CD8-positive, alpha-beta T cell (primary cell): ENCODE measurements at regions of chr11 and their contacts with region 1.

Region 1: GRCh38 chr11:47854667-47855066 is 6.5 kb upstream of the NUP160 start:
- DNase-seq: no peak
- ATAC-seq: no peak
- H3K4me3 ChIP-seq: no peak overlapping the region
- H3K4me3 Mint-ChIP-seq: no peak overlapping the region
- H3K27ac ChIP-seq: no peak overlapping the region
- H3K27ac Mint-ChIP-seq: no peak overlapping the region
- H3K4me1 ChIP-seq: peaks cover 16% of the 10 kb centered on the region
- H3K4me1 Mint-ChIP-seq: peaks cover 24% of the 10 kb centered on the region
- H3K27me3 ChIP-seq: no peaks in the 10 kb centered on the region
- H3K27me3 Mint-ChIP-seq: no peaks in the 10 kb centered on the region
- CTCF ChIP-seq: no peak

Region 2: GRCh38 chr11:47248664-47249377 is 605.8 kb before region 1 on chr11 and contains the start of gene ACP2:
- CTCF ChIA-PET with region 1: no interaction called
- POLR2A ChIA-PET with region 1: no interaction called
- intact Hi-C with region 1: no loop called
- DNase-seq: peak; percentile 70 to 93 (median 85)
- ATAC-seq: peak; percentile 97
- H3K4me3 ChIP-seq: peak within 1 kb of the TSS; percentile 81 to 90
- H3K4me3 Mint-ChIP-seq: peak within 1 kb of the TSS; percentile 100
- H3K27ac ChIP-seq: peak within 1 kb of the TSS; percentile 63 to 83
- H3K27ac Mint-ChIP-seq: peak within 1 kb of the TSS; percentile 100
- H3K4me1 ChIP-seq: peaks cover 17% of the 10 kb centered on the region
- H3K4me1 Mint-ChIP-seq: peaks cover 32% of the 10 kb centered on the region
- H3K27me3 ChIP-seq: no peaks in the 10 kb centered on the region
- H3K27me3 Mint-ChIP-seq: no peaks in the 10 kb centered on the region
- CTCF ChIP-seq: no peak
- total RNA-seq, gene ACP2: 18.3 to 22.6 TPM

Region 3: GRCh38 chr11:47869546-47870393 is 15.1 kb after region 1 on chr11:
- CTCF ChIA-PET with region 1: interaction called, 14 read pairs
- POLR2A ChIA-PET with region 1: no interaction called
- intact Hi-C with region 1: no loop called
- DNase-seq: no peak
- ATAC-seq: no peak
- H3K4me3 ChIP-seq: no peak overlapping the region
- H3K4me3 Mint-ChIP-seq: no peak overlapping the region
- H3K27ac ChIP-seq: no peak overlapping the region
- H3K27ac Mint-ChIP-seq: no peak overlapping the region
- H3K4me1 ChIP-seq: no peaks in the 10 kb centered on the region
- H3K4me1 Mint-ChIP-seq: peaks cover 3% of the 10 kb centered on the region
- H3K27me3 ChIP-seq: no peaks in the 10 kb centered on the region
- H3K27me3 Mint-ChIP-seq: no peaks in the 10 kb centered on the region
- CTCF ChIP-seq: no peak

Region 4: GRCh38 chr11:47891886-47892285 is 37.2 kb after region 1 on chr11:
- CTCF ChIA-PET with region 1: no interaction called
- POLR2A ChIA-PET with region 1: no interaction called
- intact Hi-C with region 1: no loop called
- DNase-seq: no peak
- ATAC-seq: no peak
- H3K4me3 ChIP-seq: no peak overlapping the region
- H3K4me3 Mint-ChIP-seq: no peak overlapping the region
- H3K27ac ChIP-seq: no peak overlapping the region
- H3K27ac Mint-ChIP-seq: no peak overlapping the region
- H3K4me1 ChIP-seq: peaks cover 24% of the 10 kb centered on the region
- H3K4me1 Mint-ChIP-seq: peaks cover 25% of the 10 kb centered on the region
- H3K27me3 ChIP-seq: no peaks in the 10 kb centered on the region
- H3K27me3 Mint-ChIP-seq: no peaks in the 10 kb centered on the region
- CTCF ChIP-seq: no peak